A549 (cell line): ENCODE measurements at regions of chr17 and their contacts with region 1.

Region 1: DNA sequence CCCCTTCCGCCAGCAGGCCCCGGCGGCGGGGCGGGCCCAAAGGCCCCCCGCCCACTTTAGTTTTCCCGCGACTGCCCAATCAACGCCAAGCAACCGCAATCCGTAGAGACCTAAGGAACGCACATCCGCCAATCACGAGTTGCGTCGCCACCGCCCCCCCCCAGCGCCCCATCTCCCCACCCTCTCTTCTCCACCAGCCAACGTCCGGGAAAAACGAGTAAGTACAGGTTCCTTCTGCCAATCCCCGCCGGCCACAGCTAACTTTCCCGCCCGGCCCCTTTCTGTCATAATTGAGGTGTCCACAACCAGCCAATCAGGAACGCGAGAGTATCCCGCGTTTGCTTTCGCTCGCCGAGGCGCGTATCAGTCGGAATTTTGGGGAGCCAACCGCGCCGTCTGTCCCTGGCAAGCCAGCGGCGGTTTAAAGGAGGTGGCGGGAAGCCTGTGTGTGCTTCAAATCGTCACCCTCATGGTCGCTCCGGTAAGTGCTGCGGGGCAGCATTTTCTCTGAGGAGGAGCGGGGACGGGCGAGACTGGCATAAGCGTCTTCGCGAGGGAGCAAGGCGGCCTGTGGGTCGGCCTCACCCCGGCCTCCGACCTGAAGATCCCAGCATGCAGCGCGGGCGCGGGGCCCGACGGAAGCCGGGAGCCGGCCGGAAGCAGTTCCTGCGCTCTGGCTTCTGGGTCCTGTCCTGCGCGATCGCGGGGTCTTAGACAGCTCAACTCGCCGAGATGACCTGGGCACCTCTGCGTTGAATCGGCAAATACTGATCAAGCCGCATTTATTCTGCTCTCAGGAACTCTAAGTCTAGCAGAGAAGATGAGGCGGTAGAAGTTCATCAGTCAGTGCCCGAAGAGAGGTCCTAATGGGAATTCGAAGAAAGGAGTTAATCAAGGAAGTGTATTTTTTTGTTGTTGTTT is at the start of gene MIS12:
- DNase-seq: peak; percentile 100
- ATAC-seq: peak; percentile 97
- H3K4me3 ChIP-seq: peak within 1 kb of the TSS; percentile 93
- H3K27ac ChIP-seq: peak within 1 kb of the TSS; percentile 93 to 95
- H3K4me1 ChIP-seq: peaks cover 11% of the 10 kb centered on the region; the same call in 2 of the 3 replicates
- CTCF ChIP-seq: no peak
- EP300 ChIP-seq: no peak
- POLR2A ChIP-seq: peak; percentile 73
- RAD21 ChIP-seq: no peak
- polyA plus RNA-seq, gene MIS12: 36.6 and 38.2 TPM in 2 replicates

Region 2: GRCh38 chr17:5468075-5468473 is 18.4 kb before region 1 on chr17:
- CTCF ChIA-PET with region 1: interaction called, 14 read pairs
- POLR2A ChIA-PET with region 1: interaction called, 41 read pairs
- DNase-seq: peak in 1 of 2 experiments; percentile 34
- ATAC-seq: peak; percentile 22 to 50
- H3K4me3 ChIP-seq: peak overlapping the region; percentile 91
- H3K27ac ChIP-seq: peak overlapping the region; percentile 85 to 95
- H3K4me1 ChIP-seq: peaks cover 9% of the 10 kb centered on the region; the same call in 2 of the 3 replicates
- CTCF ChIP-seq: no peak
- EP300 ChIP-seq: no peak
- POLR2A ChIP-seq: no peak
- RAD21 ChIP-seq: no peak

Region 3: GRCh38 chr17:5473906-5474305 is 12.6 kb before region 1 on chr17:
- CTCF ChIA-PET with region 1: interaction called, 14 read pairs
- POLR2A ChIA-PET with region 1: interaction called, 41 read pairs
- DNase-seq: no peak
- ATAC-seq: no peak
- H3K4me3 ChIP-seq: no peak overlapping the region
- H3K27ac ChIP-seq: no peak overlapping the region
- H3K4me1 ChIP-seq: no peaks in the 10 kb centered on the region
- CTCF ChIP-seq: no peak
- EP300 ChIP-seq: no peak
- POLR2A ChIP-seq: no peak
- RAD21 ChIP-seq: no peak

Region 4: DNA sequence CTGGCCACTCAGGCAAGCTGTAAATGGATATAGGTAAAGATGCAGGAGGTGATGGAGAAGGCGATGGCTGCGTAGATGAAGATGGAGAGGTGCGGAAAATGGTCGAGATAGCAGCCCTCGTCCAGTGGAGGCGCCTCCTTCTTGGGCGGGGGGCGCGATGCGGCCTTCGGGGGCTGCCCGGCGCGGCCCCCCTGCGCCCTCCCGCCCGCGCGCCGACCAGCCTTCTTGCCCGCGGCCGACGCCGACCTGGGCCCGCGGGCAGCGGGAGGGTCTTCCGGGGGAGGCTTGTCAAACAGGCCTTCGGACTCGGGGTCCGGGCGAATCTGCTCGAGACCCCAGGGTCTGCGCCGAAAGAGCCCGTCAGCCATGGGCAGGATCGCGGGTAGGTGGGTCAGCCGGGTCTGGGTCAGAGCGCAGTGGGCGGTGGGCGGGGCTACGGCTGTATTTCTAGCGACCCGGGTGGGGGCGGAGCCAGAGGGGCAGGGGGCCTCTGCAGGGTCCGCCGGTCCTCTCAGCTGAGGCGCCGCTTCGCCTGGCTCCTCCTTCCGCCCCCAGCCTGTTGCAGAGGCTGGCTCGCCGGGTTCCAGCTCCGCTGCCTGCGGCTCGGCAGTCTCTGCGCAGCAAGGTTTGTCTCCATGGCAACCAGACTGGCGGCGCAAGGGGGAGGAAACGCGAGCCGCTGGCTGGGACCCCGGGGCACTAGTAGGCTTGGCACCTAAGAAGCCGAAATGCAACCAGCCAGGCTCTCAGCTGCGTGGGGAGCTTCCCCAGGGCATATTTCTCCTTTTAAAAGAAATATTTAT is 14.3 kb after region 1 on chr17:
- CTCF ChIA-PET with region 1: interaction called, 7 read pairs
- POLR2A ChIA-PET with region 1: interaction called, 33 read pairs
- DNase-seq: peak; percentile 61 to 91
- ATAC-seq: peak; percentile 75 to 88
- H3K4me3 ChIP-seq: peak overlapping the region; percentile 80
- H3K27ac ChIP-seq: peak overlapping the region; percentile 20 to 79; a peak in 4 of 6 replicates
- H3K4me1 ChIP-seq: peaks cover 7% of the 10 kb centered on the region; the same call in 2 of the 3 replicates
- CTCF ChIP-seq: no peak
- EP300 ChIP-seq: no peak
- POLR2A ChIP-seq: no peak
- RAD21 ChIP-seq: no peak

Region 5: GRCh38 chr17:5516060-5516792 is 29.8 kb after region 1 on chr17:
- CTCF ChIA-PET with region 1: no interaction called
- POLR2A ChIA-PET with region 1: interaction called, 11 read pairs
- DNase-seq: peak; percentile 84 to 88
- ATAC-seq: peak; percentile 97 to 98
- H3K4me3 ChIP-seq: no peak overlapping the region
- H3K27ac ChIP-seq: peak overlapping the region; percentile 48 to 76; a peak in 5 of 6 replicates
- H3K4me1 ChIP-seq: peaks cover 19% of the 10 kb centered on the region
- CTCF ChIP-seq: no peak
- EP300 ChIP-seq: no peak
- POLR2A ChIP-seq: no peak
- RAD21 ChIP-seq: no peak